ENCODE measurements at regions of chr5 and their contacts with region 1.

Region 1: GRCh38 chr5:32249646-32250045 is 63.1 kb downstream of the MTMR12 start:
- DNase-seq: peak; percentile 83 to 85
- H3K4me3 ChIP-seq: no peak overlapping the region
- H3K4me3 Mint-ChIP-seq: peak overlapping the region; percentile 65
- H3K27ac Mint-ChIP-seq: peak overlapping the region; percentile 87
- H3K4me1 ChIP-seq: peaks cover 28% of the 10 kb centered on the region
- H3K4me1 Mint-ChIP-seq: peaks cover 37% of the 10 kb centered on the region
- H3K27me3 ChIP-seq: no peaks in the 10 kb centered on the region
- H3K27me3 Mint-ChIP-seq: no peaks in the 10 kb centered on the region
- CTCF ChIP-seq: no peak

Region 2: GRCh38 chr5:32274548-32275395 is 25.1 kb after region 1 on chr5:
- CTCF ChIA-PET with region 1: no interaction called
- POLR2A ChIA-PET with region 1: no interaction called
- intact Hi-C with region 1: loop called (anchors 1 kb)
- DNase-seq: no peak
- H3K4me3 ChIP-seq: no peak overlapping the region
- H3K4me3 Mint-ChIP-seq: no peak overlapping the region
- H3K27ac Mint-ChIP-seq: peak overlapping the region; percentile 52
- H3K4me1 ChIP-seq: peaks cover 26% of the 10 kb centered on the region
- H3K4me1 Mint-ChIP-seq: peaks cover 19% of the 10 kb centered on the region
- H3K27me3 ChIP-seq: no peaks in the 10 kb centered on the region
- H3K27me3 Mint-ChIP-seq: no peaks in the 10 kb centered on the region
- CTCF ChIP-seq: no peak

Region 3: DNA sequence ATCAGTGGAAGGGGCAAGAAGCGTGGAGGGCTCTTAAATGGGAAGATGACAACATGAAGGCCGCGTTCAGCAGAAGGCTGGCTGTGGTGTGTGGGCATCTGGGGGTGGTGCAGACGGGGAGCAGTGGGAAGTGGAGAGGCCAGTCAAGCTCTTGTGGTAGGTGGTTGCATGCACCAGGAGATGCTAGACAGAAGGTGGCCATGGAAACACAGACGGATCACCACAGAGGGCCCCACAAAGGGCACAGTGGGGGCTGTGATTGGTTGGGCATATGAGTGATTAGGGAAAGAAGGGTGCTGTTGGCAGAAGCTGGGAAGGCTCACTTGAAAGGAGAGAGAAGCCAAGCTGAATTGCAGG is 48.4 kb after region 1 on chr5:
- CTCF ChIA-PET with region 1: no interaction called
- POLR2A ChIA-PET with region 1: no interaction called
- intact Hi-C with region 1: no loop called
- DNase-seq: no peak
- H3K4me3 ChIP-seq: no peak overlapping the region
- H3K4me3 Mint-ChIP-seq: no peak overlapping the region
- H3K27ac Mint-ChIP-seq: no peak overlapping the region
- H3K4me1 ChIP-seq: peaks cover 4% of the 10 kb centered on the region
- H3K4me1 Mint-ChIP-seq: peaks cover under 1% of the 10 kb centered on the region
- H3K27me3 ChIP-seq: no peaks in the 10 kb centered on the region
- H3K27me3 Mint-ChIP-seq: no peaks in the 10 kb centered on the region
- CTCF ChIP-seq: no peak

Region 4: DNA sequence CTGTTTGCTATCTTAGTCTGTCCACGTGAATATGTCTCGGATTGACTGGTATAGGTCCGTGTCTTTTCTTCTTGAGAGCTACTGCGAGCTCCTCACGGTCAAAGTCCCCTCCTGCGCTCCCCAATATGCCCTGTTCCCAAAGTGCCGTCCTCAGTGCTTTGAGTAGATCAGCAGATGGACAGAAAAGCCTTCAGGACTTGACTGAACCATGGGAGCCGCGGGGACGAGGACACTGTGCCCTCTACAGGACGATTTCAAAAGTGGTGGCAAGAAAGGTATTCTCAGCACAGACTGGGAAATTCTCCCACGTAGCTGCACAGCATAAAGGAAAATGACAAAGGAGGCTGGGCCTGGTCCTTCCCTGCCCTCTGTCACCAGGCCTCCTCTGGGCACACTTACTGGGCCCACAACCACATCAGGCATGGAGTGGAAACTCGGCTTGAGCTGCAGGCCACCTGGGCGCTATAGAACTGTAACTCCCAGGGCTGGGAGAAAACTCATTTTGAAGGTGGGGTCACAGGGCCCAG is 79.7 kb after region 1 on chr5:
- CTCF ChIA-PET with region 1: no interaction called
- POLR2A ChIA-PET with region 1: no interaction called
- intact Hi-C with region 1: loop called (anchors 1 kb)
- DNase-seq: peak; percentile 61 to 68
- H3K4me3 ChIP-seq: no peak overlapping the region
- H3K4me3 Mint-ChIP-seq: no peak overlapping the region
- H3K27ac Mint-ChIP-seq: no peak overlapping the region
- H3K4me1 ChIP-seq: peaks cover 10% of the 10 kb centered on the region; the same call in 1 of the 2 replicates
- H3K4me1 Mint-ChIP-seq: peaks cover 16% of the 10 kb centered on the region
- H3K27me3 ChIP-seq: no peaks in the 10 kb centered on the region
- H3K27me3 Mint-ChIP-seq: no peaks in the 10 kb centered on the region
- CTCF ChIP-seq: peak; percentile 63 to 67

Measured in Caco-2 (cell line).